Dendritic cell treated with granulocyte-macrophage colony-stimulating factor and Interleukin-4, amounts not matched to agents 40 ng/mL and 50 ng/mL, for 4 days (primary cell): ENCODE measurements at regions of chr4 and their contacts with region 1.

Region 1: GRCh38 chr4:124018383-124019317 is 622.1 kb downstream of the SPRY1 start:
- H3K4me3 Mint-ChIP-seq: peak overlapping the region; percentile 44
- H3K27ac Mint-ChIP-seq: peak overlapping the region; percentile 92
- H3K4me1 Mint-ChIP-seq: peaks cover 24% of the 10 kb centered on the region
- H3K27me3 Mint-ChIP-seq: no peaks in the 10 kb centered on the region

Region 2: DNA sequence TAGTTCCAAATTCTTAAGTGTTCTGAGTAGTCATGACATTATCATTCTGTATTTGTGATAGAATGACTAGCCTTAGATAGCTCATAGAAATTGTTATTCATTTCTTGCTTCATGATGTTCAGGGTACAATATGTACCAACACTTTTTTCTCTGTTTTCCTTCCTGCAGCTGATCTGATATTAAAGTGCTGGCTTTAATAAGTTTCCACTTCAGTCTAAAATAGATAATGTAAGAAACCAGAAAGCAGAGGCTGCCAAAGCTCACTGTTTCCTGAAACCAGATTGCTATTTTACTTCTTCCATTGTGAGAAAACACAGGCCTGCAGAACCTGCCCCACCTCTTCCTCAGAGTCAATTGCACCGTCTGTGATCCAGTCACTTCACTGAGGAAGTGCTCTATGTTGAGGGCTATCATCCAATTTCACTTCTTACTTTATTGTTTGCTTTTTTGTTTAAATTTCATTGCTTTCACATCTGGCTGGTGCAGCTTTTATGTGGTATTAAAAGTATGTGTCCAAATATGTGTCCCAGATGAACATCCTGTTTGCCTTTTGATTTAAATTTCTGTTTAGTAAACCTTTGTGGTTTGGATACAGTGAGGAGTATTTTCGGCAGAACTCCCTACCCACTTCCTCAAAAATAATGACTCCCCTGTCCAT is 41.7 kb after region 1 on chr4:
- intact Hi-C with region 1: loop called (anchors 2 kb)
- H3K4me3 Mint-ChIP-seq: peak overlapping the region; percentile 38
- H3K27ac Mint-ChIP-seq: peak overlapping the region; percentile 84
- H3K4me1 Mint-ChIP-seq: peaks cover 17% of the 10 kb centered on the region
- H3K27me3 Mint-ChIP-seq: no peaks in the 10 kb centered on the region